Dorsolateral prefrontal cortex (tissue), 120 donors: ENCODE measurements at regions of chr13 and their contacts with region 1.

Region 1: DNA sequence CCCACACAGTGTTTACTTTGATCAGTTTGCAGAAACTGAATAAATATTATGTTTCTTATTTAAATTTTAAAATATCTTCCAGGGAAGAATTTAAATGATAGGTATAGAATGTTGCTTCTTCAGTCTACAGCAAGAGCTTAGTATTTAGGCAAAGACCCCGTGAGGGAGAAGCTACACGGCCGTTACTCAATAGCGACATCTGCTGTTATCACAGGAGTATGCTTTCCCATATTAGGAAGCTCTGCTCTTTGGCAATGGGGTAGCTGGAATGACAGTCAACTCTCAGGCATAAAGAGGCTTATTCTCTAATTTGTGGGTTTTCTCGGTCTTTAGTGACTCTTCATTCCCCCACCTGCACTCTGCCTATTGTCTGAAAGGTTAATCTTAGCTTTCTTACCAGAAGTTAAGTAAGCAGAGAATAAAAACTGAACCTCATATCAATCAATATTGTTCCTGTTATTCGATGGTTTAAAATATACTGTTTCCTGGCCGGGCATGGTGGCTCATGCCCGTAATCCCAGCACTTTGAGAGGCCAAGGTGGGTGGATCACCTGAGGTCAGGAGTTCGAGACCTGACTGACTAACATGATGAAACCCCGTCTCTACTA is 13.2 kb upstream of the LHFPL6 start:
- DNase-seq: peak in 5 of 10 donors; percentile 21 to 66 (median 48)
- H3K4me3 ChIP-seq: no peak overlapping the region
- H3K27ac ChIP-seq: no peak overlapping the region
- H3K27me3 ChIP-seq: no peaks in the 10 kb centered on the region
- CTCF ChIP-seq: peak; percentile 78 to 97 (median 93)

Region 2: DNA sequence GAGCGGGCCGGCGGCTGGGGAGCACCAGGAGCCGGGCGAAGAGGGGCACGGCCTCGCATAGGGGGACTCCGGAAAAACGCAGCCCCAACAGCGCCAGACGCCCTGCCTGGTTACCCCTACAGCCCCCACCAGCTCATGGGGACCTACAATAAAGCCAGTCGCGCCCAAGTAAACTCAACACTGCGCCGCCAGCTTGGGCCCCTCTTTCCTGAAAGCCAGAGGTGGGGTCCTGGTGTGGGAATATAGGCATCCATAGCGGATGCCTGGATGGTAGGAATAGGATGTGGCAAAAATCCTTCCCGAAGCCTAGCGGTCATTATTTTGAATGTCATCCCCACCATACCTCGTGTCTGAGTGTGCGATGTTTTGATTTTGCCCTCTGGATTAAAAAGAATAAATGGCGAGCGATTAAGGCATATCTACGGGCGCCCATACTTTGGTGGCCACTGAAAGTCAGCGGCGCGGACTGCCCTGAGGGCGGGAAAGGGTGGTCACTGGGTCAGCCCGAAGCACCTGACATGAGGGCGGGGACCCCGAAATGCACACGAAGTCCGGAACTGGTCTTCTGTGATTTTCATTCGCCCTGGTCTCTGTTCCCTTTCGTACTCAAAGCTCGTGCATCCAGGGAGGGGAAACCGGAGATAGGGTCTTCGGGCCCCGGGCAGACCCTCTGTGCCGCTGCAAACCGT is 578.2 kb before region 1 on chr13 and contains the starts of genes NHLRC3 and PROSER1:
- intact Hi-C with region 1: loop called in 1 of 2 experiments (anchors 5 kb)
- DNase-seq: peak; percentile 87 to 98 (median 96)
- H3K4me3 ChIP-seq: peak within 1 kb of the TSS; percentile 67 to 100 (median 94)
- H3K27ac ChIP-seq: peak within 1 kb of the TSS; percentile 63 to 98 (median 94)
- H3K27me3 ChIP-seq: no peaks in the 10 kb centered on the region
- CTCF ChIP-seq: peak in 32 of 56 donors; percentile 8 to 54 (median 25)
- total RNA-seq, gene NHLRC3: 18.1 to 43.9 (median 30.2) TPM
- total RNA-seq, gene PROSER1: 17.7 to 56.8 (median 32.6) TPM

Region 3: DNA sequence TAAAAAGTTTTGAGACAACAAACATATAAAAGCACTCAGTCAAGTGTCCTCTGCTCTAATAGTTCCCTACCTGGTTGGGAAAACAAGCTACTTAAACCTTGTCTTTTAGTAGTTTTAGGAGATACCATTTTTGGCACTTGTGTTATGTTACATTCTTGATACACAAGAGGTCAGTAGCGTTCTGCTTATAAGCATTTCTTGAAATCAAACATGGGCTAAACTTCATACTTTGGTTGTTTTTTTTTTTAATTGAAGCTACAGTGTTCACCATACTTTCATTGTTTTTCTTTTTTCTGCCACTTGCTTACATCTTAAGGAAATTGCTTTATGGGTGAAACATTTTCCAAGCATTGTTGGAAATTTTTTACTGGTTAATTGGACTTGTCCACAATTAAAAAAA is 565.0 kb before region 1 on chr13:
- intact Hi-C with region 1: loop called (anchors 2 to 5 kb)
- DNase-seq: no peak
- H3K4me3 ChIP-seq: peak overlapping the region in 1 of 59 donors; percentile 28
- H3K27ac ChIP-seq: peak overlapping the region in 30 of 59 donors; percentile 0 to 81 (median 54)
- H3K27me3 ChIP-seq: no peaks in the 10 kb centered on the region
- CTCF ChIP-seq: peak; percentile 21 to 86 (median 69)

Region 4: GRCh38 chr13:39144941-39145533 is 471.2 kb before region 1 on chr13:
- intact Hi-C with region 1: loop called (anchors 2 to 5 kb)
- DNase-seq: peak; percentile 13 to 72 (median 52)
- H3K4me3 ChIP-seq: peak overlapping the region in 41 of 59 donors; percentile 1 to 58 (median 29)
- H3K27ac ChIP-seq: peak overlapping the region in 4 of 59 donors; percentile 21 to 34 (median 28)
- H3K27me3 ChIP-seq: no peaks in the 10 kb centered on the region
- CTCF ChIP-seq: peak; percentile 37 to 89 (median 79)

Region 5: DNA sequence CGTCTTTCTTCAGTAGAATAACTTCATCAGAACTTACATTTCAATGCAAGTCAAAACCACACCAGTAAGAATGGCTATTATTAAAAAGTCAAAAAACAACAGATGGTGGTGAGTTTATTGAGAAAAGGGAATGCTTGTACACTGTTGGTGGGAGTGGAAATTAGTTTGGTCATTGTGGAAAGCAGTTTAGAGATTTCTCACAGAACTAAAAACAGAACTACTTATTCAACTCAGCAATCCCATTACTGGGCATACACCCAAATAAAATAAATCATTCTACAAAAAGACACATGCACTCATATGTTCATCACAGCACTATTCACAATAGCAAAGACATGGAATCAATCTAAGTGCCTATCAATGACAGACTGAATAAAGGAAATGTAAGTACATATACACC is 346.8 kb before region 1 on chr13:
- intact Hi-C with region 1: loop called in 1 of 2 experiments (anchors 5 kb)
- DNase-seq: no peak
- H3K4me3 ChIP-seq: no peak overlapping the region
- H3K27ac ChIP-seq: peak overlapping the region in 1 of 59 donors; percentile 16
- H3K27me3 ChIP-seq: no peaks in the 10 kb centered on the region
- CTCF ChIP-seq: no peak